ENCODE measurements at regions of chrX and their contacts with region 1.

Region 1: GRCh38 chrX:153609917-153610428 is 11.0 kb upstream of the CCNQ start:
- DNase-seq: peak; percentile 65 to 74
- ATAC-seq: peak; percentile 90 to 98
- H3K4me3 ChIP-seq: peak overlapping the region; percentile 44
- H3K27ac ChIP-seq: peak overlapping the region; percentile 57 to 89; a peak in 5 of 6 replicates
- H3K4me1 ChIP-seq: peaks cover 6% of the 10 kb centered on the region; the same call in 2 of the 3 replicates
- CTCF ChIP-seq: peak; percentile 69
- EP300 ChIP-seq: no peak
- POLR2A ChIP-seq: no peak
- RAD21 ChIP-seq: peak; percentile 69 to 77

Region 2: DNA sequence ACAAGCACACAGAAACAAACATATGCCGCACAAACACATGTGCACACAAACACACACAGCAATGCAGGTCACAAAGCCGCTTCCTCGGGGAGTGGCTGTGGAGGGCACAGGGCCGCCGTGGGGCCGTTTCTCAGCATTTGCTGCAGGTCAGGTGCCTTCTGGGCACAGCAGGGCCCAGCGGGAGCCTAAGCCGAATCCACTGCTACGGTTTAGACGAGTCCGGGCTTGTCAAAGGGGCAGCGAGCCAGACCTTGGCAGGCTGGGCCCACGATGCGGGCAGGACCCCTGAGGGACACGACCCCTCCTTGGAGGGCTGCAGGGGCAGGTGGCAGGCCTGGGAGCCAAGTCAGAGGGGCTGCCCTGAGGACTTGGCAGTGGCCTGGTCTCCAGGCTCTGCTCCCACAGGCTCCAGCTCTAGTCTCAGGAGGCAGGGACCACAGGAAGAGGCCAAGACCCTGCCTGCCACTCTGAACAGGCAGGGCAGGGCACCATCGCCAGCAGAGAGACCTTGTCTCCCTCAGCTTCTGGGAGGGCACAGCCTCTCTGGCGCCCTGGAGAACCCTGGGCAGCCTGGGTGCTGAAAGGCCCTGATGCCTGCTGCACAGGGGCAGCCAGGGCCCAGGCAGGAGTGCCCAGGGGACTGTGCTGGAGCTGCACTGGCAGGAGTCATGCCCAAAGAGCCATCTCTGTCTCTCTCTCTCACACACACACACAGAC is 98.0 kb before region 1 on chrX:
- CTCF ChIA-PET with region 1: no interaction called
- POLR2A ChIA-PET with region 1: no interaction called
- DNase-seq: no peak
- ATAC-seq: no peak
- H3K4me3 ChIP-seq: no peak overlapping the region
- H3K27ac ChIP-seq: 0 out of 6 replicates have a peak overlapping the region, but pooled peaks of 1 of the 2 experiments have one; percentile 43
- H3K4me1 ChIP-seq: no peaks in the 10 kb centered on the region
- CTCF ChIP-seq: no peak
- EP300 ChIP-seq: no peak
- POLR2A ChIP-seq: no peak
- RAD21 ChIP-seq: no peak

Region 3: GRCh38 chrX:153599192-153600031 is 10.6 kb before region 1 on chrX:
- CTCF ChIA-PET with region 1: interaction called, 45 read pairs
- POLR2A ChIA-PET with region 1: interaction called, 4 read pairs
- DNase-seq: peak; percentile 77 to 90
- ATAC-seq: peak; percentile 81 to 95
- H3K4me3 ChIP-seq: peak overlapping the region; percentile 82
- H3K27ac ChIP-seq: peak overlapping the region; percentile 81 to 94
- H3K4me1 ChIP-seq: peaks cover 17% of the 10 kb centered on the region; the same call in 2 of the 3 replicates
- CTCF ChIP-seq: no peak
- EP300 ChIP-seq: no peak
- POLR2A ChIP-seq: peak; percentile 52
- RAD21 ChIP-seq: no peak

Region 4: DNA sequence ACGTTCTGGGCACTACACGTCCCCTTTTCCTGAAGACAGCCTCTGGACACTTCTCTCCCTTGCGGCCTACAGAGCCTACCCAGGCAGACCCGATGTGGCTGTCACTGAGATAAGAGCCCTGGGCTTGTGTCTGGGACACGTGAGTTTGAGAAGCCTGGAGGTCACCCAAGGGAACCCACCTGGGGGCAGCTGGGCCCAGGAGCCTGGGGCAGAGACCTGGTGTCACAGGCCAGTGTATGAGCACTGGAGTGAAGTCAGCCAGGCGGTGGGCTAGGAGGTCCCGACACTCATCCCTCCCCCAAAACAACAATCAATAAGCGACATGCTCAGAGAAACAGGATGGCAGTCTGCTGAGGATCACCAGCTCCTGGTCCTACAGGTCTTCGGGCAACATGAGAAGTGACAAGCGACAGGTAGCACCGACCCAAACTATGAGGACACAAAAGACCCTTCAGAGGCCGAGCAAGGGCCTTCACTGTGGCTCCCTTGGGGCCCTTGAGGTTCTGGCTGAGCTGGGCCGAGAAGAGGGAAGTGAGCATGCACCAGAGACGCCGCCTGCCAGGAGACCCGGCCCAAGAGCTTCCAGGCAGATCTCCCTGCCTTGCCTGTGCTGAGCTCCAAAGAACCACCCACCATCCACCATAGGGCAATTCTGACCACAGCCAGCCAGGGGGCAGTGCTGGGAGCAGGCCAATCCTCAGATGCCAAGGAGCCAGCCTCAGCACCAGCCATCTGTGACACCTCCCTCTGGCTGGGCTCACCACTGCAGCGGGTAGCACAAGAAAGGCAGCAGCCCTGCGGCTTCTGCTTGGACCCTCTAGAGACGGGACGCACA is 26.0 kb after region 1 on chrX:
- CTCF ChIA-PET with region 1: interaction called, 17 read pairs
- POLR2A ChIA-PET with region 1: no interaction called
- DNase-seq: peak; percentile 69 to 79
- ATAC-seq: peak; percentile 82 to 98
- H3K4me3 ChIP-seq: no peak overlapping the region
- H3K27ac ChIP-seq: no peak overlapping the region
- H3K4me1 ChIP-seq: no peaks in the 10 kb centered on the region
- CTCF ChIP-seq: peak; percentile 41; the same call in 2 of the 3 replicates
- EP300 ChIP-seq: no peak
- POLR2A ChIP-seq: no peak
- RAD21 ChIP-seq: peak in 1 of 2 experiments; percentile 34; a peak in 2 of 5 replicates

Region 5: GRCh38 chrX:153649178-153649914 is 39.4 kb after region 1 on chrX:
- CTCF ChIA-PET with region 1: interaction called, 12 read pairs
- POLR2A ChIA-PET with region 1: no interaction called
- DNase-seq: peak; percentile 57 to 69
- ATAC-seq: peak; percentile 55 to 77; a peak in 5 of 6 replicates
- H3K4me3 ChIP-seq: no peak overlapping the region
- H3K27ac ChIP-seq: no peak overlapping the region
- H3K4me1 ChIP-seq: peaks cover 13% of the 10 kb centered on the region; the same call in 1 of the 3 replicates
- CTCF ChIP-seq: peak; percentile 31
- EP300 ChIP-seq: no peak
- POLR2A ChIP-seq: no peak
- RAD21 ChIP-seq: peak; percentile 58 to 65; a peak in 4 of 5 replicates

Region 6: GRCh38 chrX:153667956-153668396 is 58.0 kb after region 1 on chrX:
- CTCF ChIA-PET with region 1: interaction called, 24 read pairs
- POLR2A ChIA-PET with region 1: no interaction called
- DNase-seq: peak; percentile 81 to 85
- ATAC-seq: peak; percentile 60 to 92
- H3K4me3 ChIP-seq: peak overlapping the region; percentile 35
- H3K27ac ChIP-seq: peak overlapping the region; percentile 30 to 63; a peak in 3 of 6 replicates
- H3K4me1 ChIP-seq: no peaks in the 10 kb centered on the region
- CTCF ChIP-seq: peak; percentile 63
- EP300 ChIP-seq: no peak
- POLR2A ChIP-seq: no peak
- RAD21 ChIP-seq: peak; percentile 58 to 74

Measured in A549 (cell line).